ENCODE measurements at regions of chr4 and their contacts with region 1.

Region 1: GRCh38 chr4:163332500-163333406 is at the start of gene NPY1R:
- DNase-seq: peak; percentile 86
- H3K4me3 Mint-ChIP-seq: peak within 1 kb of the TSS; percentile 97
- H3K27ac Mint-ChIP-seq: peak within 1 kb of the TSS; percentile 73
- H3K4me1 Mint-ChIP-seq: peaks cover 5% of the 10 kb centered on the region
- H3K27me3 Mint-ChIP-seq: no peaks in the 10 kb centered on the region
- CTCF ChIP-seq: peak; percentile 68
- total RNA-seq, gene NPY1R: 0.63 and 2.8 TPM in 2 replicates

Region 2: GRCh38 chr4:162497564-162498167 is 835.1 kb before region 1 on chr4:
- CTCF ChIA-PET with region 1: interaction called, 20 read pairs
- POLR2A ChIA-PET with region 1: no interaction called
- intact Hi-C with region 1: loop called (anchors 1 kb)
- DNase-seq: peak; percentile 66
- H3K4me3 Mint-ChIP-seq: no peak overlapping the region
- H3K27ac Mint-ChIP-seq: no peak overlapping the region
- H3K4me1 Mint-ChIP-seq: peaks cover 6% of the 10 kb centered on the region
- H3K27me3 Mint-ChIP-seq: no peaks in the 10 kb centered on the region
- CTCF ChIP-seq: peak; percentile 90

Region 3: GRCh38 chr4:162645381-162645780 is 687.4 kb before region 1 on chr4:
- CTCF ChIA-PET with region 1: interaction called, 11 read pairs
- POLR2A ChIA-PET with region 1: no interaction called
- intact Hi-C with region 1: loop called (anchors 2 kb)
- DNase-seq: peak; percentile 18
- H3K4me3 Mint-ChIP-seq: no peak overlapping the region
- H3K27ac Mint-ChIP-seq: no peak overlapping the region
- H3K4me1 Mint-ChIP-seq: no peaks in the 10 kb centered on the region
- H3K27me3 Mint-ChIP-seq: no peaks in the 10 kb centered on the region
- CTCF ChIP-seq: peak; percentile 17

Region 4: DNA sequence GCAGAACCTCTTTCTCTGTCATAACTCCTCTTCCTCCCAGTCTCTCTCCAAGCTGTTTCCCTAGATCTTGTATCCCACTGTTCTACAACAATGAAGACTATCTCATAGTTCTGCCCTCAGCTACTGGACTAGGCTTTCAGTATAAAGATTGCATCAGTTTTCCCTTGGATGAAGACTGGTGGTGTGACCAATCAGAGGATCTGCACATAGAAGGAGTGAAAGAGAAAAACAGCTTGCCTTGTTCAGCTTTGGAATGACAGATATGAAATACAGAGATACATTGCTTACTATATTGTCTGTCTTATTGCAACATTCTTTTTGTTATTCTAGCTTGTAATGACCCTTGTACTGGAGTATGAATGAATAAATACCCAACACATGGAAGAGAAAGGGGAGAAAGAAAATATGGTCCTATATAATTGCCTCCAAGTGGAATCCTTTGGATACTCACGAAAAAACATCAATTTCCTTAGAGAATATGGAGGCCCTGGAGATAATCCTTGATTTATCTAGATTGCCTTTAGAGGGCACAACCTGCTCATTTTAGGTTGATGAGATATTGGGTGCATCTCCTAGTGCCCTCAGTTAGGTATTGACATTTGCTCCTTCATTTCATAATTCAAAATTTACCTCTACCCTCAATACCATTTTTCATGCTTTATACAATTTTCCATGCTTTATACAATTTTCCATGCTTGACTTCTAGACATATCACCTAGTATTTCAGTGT is 561.8 kb before region 1 on chr4:
- CTCF ChIA-PET with region 1: no interaction called
- POLR2A ChIA-PET with region 1: no interaction called
- intact Hi-C with region 1: loop called (anchors 1 kb)
- DNase-seq: no peak
- H3K4me3 Mint-ChIP-seq: no peak overlapping the region
- H3K27ac Mint-ChIP-seq: no peak overlapping the region
- H3K4me1 Mint-ChIP-seq: peaks cover 19% of the 10 kb centered on the region
- H3K27me3 Mint-ChIP-seq: no peaks in the 10 kb centered on the region
- CTCF ChIP-seq: peak; percentile 20

Region 5: DNA sequence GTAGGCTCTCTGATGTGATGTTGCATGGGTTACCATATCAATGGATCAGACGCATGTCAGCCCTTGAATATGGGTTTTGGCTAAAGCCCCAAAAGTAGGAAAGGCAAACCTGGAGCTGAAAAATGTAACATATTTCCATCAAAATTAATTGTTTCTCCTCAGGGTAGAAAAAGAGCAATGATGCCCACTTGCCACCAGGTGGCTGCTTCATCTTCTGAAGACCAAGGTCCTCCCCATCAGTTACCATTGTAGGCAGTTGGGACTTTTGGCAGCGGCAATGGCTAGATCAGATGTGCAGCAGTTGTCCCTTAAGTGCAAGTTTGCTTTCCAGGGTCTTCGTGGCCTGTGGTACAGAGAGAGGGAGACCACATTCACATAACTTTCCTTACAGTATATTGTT is 284.3 kb before region 1 on chr4:
- CTCF ChIA-PET with region 1: interaction called, 7 read pairs
- POLR2A ChIA-PET with region 1: no interaction called
- intact Hi-C with region 1: loop called (anchors 1 kb)
- DNase-seq: peak; percentile 51
- H3K4me3 Mint-ChIP-seq: no peak overlapping the region
- H3K27ac Mint-ChIP-seq: no peak overlapping the region
- H3K4me1 Mint-ChIP-seq: no peaks in the 10 kb centered on the region
- H3K27me3 Mint-ChIP-seq: no peaks in the 10 kb centered on the region
- CTCF ChIP-seq: peak; percentile 41

Region 6: GRCh38 chr4:163107754-163108153 is 225.0 kb before region 1 on chr4:
- CTCF ChIA-PET with region 1: interaction called, 20 read pairs
- POLR2A ChIA-PET with region 1: interaction called, 4 read pairs
- intact Hi-C with region 1: loop called (anchors 1 kb)
- DNase-seq: peak; percentile 36
- H3K4me3 Mint-ChIP-seq: no peak overlapping the region
- H3K27ac Mint-ChIP-seq: no peak overlapping the region
- H3K4me1 Mint-ChIP-seq: no peaks in the 10 kb centered on the region
- H3K27me3 Mint-ChIP-seq: no peaks in the 10 kb centered on the region
- CTCF ChIP-seq: peak; percentile 18

Region 7: GRCh38 chr4:163166041-163166579 is 166.6 kb before region 1 on chr4:
- CTCF ChIA-PET with region 1: interaction called, 4 read pairs
- POLR2A ChIA-PET with region 1: interaction called, 19 read pairs
- intact Hi-C with region 1: loop called (anchors 2 kb)
- DNase-seq: peak; percentile 63
- H3K4me3 Mint-ChIP-seq: peak overlapping the region; percentile 77
- H3K27ac Mint-ChIP-seq: peak overlapping the region; percentile 99
- H3K4me1 Mint-ChIP-seq: peaks cover 26% of the 10 kb centered on the region
- H3K27me3 Mint-ChIP-seq: no peaks in the 10 kb centered on the region
- CTCF ChIP-seq: no peak

Region 8: GRCh38 chr4:163568843-163569242 is 236.1 kb after region 1 on chr4:
- CTCF ChIA-PET with region 1: no interaction called
- POLR2A ChIA-PET with region 1: no interaction called
- intact Hi-C with region 1: no loop called
- DNase-seq: no peak
- H3K4me3 Mint-ChIP-seq: no peak overlapping the region
- H3K27ac Mint-ChIP-seq: no peak overlapping the region
- H3K4me1 Mint-ChIP-seq: no peaks in the 10 kb centered on the region
- H3K27me3 Mint-ChIP-seq: no peaks in the 10 kb centered on the region
- CTCF ChIP-seq: no peak